ENCODE measurements at regions of chr11 and their contacts with region 1.

Region 1: DNA sequence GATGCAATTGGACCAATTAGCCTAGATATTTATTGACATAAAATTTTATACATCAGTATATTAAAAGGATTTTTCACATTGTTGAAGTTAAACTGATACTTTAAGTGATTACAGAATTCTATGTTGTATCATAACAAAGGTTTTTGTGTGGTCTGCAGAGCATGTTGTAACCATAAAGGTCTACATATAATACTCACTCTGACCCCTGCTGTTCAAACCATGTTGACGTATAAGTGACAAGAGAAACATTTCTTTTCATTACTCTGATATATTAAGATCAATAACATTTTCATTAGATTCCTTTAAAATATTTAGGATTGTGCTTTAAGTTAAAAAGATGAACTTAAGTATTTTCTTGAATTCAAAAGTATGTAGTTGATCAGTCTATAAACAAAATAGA is 63.9 kb downstream of the GAS2 start:
- DNase-seq: peak; percentile 39
- H3K4me3 ChIP-seq: no peak overlapping the region
- H3K27ac ChIP-seq: no peak overlapping the region
- H3K4me1 ChIP-seq: peaks cover 10% of the 10 kb centered on the region
- H3K27me3 ChIP-seq: no peaks in the 10 kb centered on the region
- CTCF ChIP-seq: no peak
- POLR2A ChIP-seq: no peak

Region 2: DNA sequence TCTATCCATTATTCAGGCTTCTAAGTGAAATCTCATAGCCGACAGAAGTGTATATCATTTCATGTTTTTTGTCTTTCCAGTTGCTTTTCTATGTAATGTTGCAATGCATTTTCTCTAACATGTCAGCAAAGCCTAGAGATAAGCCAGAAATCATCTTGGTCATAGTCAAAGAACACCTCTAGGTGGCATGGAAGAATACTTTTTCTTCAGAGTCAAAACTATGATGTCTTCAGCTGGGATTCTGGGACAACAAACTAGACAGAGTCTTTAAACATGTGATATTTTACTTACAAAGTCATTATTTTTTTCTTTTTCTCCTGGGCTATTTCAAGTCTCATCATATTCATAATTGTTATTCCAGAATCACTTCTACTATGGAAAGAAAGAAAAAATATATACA is 59.5 kb before region 1 on chr11:
- CTCF ChIA-PET with region 1: interaction called, 12 read pairs
- POLR2A ChIA-PET with region 1: no interaction called
- dilution Hi-C with region 1: no loop called
- intact Hi-C with region 1: loop called (anchors 1 kb)
- DNase-seq: peak; percentile 44
- H3K4me3 ChIP-seq: no peak overlapping the region
- H3K27ac ChIP-seq: no peak overlapping the region
- H3K4me1 ChIP-seq: peaks cover 2% of the 10 kb centered on the region
- H3K27me3 ChIP-seq: peaks cover 38 to 70% of the 10 kb centered on the region in 2 experiments
- CTCF ChIP-seq: no peak
- POLR2A ChIP-seq: no peak

Region 3: GRCh38 chr11:22703040-22703439 is 27.3 kb before region 1 on chr11:
- CTCF ChIA-PET with region 1: interaction called, 3 read pairs
- POLR2A ChIA-PET with region 1: no interaction called
- dilution Hi-C with region 1: no loop called
- intact Hi-C with region 1: loop called (anchors 2 kb)
- DNase-seq: peak; percentile 93
- H3K4me3 ChIP-seq: peak overlapping the region in 1 of 3 experiments; percentile 22
- H3K27ac ChIP-seq: peak overlapping the region; percentile 68
- H3K4me1 ChIP-seq: peaks cover 20% of the 10 kb centered on the region
- H3K27me3 ChIP-seq: peaks cover 0 to 10% of the 10 kb centered on the region in 2 experiments
- CTCF ChIP-seq: no peak
- POLR2A ChIP-seq: no peak